Motor neuron (in vitro differentiated cells): ENCODE measurements at regions of chr1 and their contacts with region 1.

Region 1: GRCh38 chr1:15430787-15431570 is 7.3 kb upstream of the CTRC start:
- ATAC-seq: peak; percentile 9 to 63 (median 36)
- H3K4me3 ChIP-seq: no peak overlapping the region
- H3K27ac ChIP-seq: no peak overlapping the region
- H3K4me1 ChIP-seq: peaks cover 10 to 20% of the 10 kb centered on the region in 2 donors

Region 2: DNA sequence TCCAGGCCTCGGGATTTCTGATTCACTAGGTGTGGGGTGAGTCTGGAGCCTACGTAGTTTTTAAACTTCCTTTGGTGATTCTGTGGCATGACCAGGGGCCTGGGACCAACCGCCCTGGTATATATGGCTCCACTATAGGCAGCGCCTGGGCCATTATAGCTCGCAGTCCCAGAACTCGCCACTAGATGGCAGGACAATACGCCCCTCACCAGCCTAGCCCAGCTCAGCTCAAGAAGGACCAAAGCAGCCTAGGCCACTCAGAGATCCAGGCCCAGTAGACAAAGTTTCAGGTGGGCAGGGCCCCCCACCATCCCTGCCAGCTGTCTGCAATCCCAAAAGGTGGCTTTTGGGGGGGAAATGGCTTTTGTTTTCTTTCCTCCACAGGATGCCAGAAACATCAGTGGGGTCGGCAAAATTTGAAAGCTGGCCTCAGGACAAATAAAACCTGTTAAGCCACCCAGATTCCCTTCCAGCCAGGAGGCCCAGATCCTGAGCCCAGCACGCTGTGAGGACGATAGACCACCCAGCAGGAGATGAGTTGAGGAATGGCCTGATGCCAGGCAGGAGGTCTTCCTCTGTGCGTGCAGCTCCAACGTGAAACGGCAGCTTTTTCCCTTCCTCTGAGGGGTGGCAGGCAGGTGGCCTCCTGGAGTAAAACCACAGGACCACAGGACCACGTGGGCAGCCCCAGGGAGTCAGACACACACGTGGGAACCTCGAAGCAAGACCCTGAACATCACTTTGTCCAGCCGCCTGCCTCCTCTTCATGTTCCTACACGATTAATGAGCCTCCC is 302.3 kb before region 1 on chr1:
- in situ Hi-C with region 1: loop called in 3 of 9 experiments (anchors 25 kb)
- ATAC-seq: peak; percentile 94 to 100 (median 96)
- H3K4me3 ChIP-seq: no peak overlapping the region
- H3K27ac ChIP-seq: no peak overlapping the region
- H3K4me1 ChIP-seq: no peaks in the 10 kb centered on the region

Region 3: GRCh38 chr1:15311880-15312279 is 119.1 kb before region 1 on chr1:
- in situ Hi-C with region 1: loop called in 2 of 9 experiments (anchors 10 kb)
- ATAC-seq: no peak
- H3K4me3 ChIP-seq: no peak overlapping the region
- H3K27ac ChIP-seq: no peak overlapping the region
- H3K4me1 ChIP-seq: peaks cover 0 to 7% of the 10 kb centered on the region in 2 donors

Region 4: GRCh38 chr1:15323351-15323988 is 107.5 kb before region 1 on chr1:
- in situ Hi-C with region 1: loop called in 4 of 9 experiments (anchors 10 to 25 kb)
- ATAC-seq: peak; percentile 58 to 97 (median 74)
- H3K4me3 ChIP-seq: no peak overlapping the region
- H3K27ac ChIP-seq: peak overlapping the region in 1 of 2 donors; percentile 35
- H3K4me1 ChIP-seq: peaks cover 30 to 47% of the 10 kb centered on the region in 2 donors

Region 5: DNA sequence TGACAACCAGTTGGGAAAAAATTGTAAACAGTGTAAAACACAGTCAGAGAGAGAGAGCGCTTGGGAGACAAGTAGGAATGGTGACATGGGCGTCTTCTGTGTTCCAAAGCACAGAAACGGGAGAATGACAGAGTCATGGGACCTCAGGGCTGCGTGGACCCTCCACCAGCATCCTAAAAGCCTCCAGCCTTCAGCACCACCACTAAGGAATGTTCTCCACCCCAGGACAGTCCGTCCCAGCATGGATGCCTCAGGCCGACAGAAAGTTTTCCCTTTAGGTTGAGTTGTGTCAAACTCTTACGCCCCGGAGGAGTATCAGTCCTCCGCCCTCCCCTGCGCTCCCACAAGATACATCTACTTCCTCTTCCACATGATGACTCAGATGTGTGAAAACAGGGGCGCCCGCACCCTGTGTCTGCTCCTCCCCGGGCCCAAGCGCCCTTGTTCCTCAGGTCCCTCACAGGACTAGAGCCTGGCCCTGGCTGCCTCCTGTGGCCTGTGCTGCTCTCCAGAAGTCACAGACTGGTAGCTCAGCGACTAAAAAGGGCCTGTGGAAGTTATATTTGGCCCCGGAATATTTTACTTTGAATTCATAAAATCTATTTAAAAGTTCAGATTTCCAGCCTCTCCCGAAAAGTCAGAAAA is 85.1 kb before region 1 on chr1:
- in situ Hi-C with region 1: loop called in 1 of 9 experiments (anchors 25 kb)
- ATAC-seq: peak in 3 of 8 experiments; percentile 31 to 86 (median 75)
- H3K4me3 ChIP-seq: no peak overlapping the region
- H3K27ac ChIP-seq: no peak overlapping the region
- H3K4me1 ChIP-seq: peaks cover 7 to 10% of the 10 kb centered on the region in 2 donors